ENCODE measurements at regions of chr9 and their contacts with region 1.

Region 1: GRCh38 chr9:15873569-15874177 is 320.8 kb downstream of the CCDC171 start:
- DNase-seq: peak in 3 of 4 experiments; percentile 4 to 30 (median 6)
- ATAC-seq: no peak
- H3K4me3 ChIP-seq: no peak overlapping the region
- H3K27ac ChIP-seq: no peak overlapping the region
- H3K4me1 ChIP-seq: no peaks in the 10 kb centered on the region
- H3K27me3 ChIP-seq: no peaks in the 10 kb centered on the region
- CTCF ChIP-seq: peak in 1 of 3 experiments; percentile 53; a peak in 3 of 6 replicates
- EP300 ChIP-seq: no peak
- POLR2A ChIP-seq: no peak
- RAD21 ChIP-seq: peak; percentile 40 to 50

Region 2: GRCh38 chr9:15531380-15531779 is 342.3 kb before region 1 on chr9:
- CTCF ChIA-PET with region 1: no interaction called
- POLR2A ChIA-PET with region 1: no interaction called
- in situ Hi-C with region 1: no loop called
- intact Hi-C with region 1: no loop called
- DNase-seq: no peak
- ATAC-seq: no peak
- H3K4me3 ChIP-seq: no peak overlapping the region
- H3K27ac ChIP-seq: no peak overlapping the region
- H3K4me1 ChIP-seq: peaks cover 0 to 3% of the 10 kb centered on the region in 2 experiments; a peak in 1 of 5 replicates
- H3K27me3 ChIP-seq: no peaks in the 10 kb centered on the region
- CTCF ChIP-seq: no peak
- EP300 ChIP-seq: no peak
- POLR2A ChIP-seq: no peak
- RAD21 ChIP-seq: no peak

Region 3: GRCh38 chr9:16133556-16134227 is 260.0 kb after region 1 on chr9:
- CTCF ChIA-PET with region 1: no interaction called
- POLR2A ChIA-PET with region 1: no interaction called
- in situ Hi-C with region 1: no loop called
- intact Hi-C with region 1: loop called (anchors 10 kb)
- DNase-seq: peak; percentile 28 to 52 (median 46)
- ATAC-seq: peak; percentile 74
- H3K4me3 ChIP-seq: no peak overlapping the region
- H3K27ac ChIP-seq: no peak overlapping the region
- H3K4me1 ChIP-seq: no peaks in the 10 kb centered on the region
- H3K27me3 ChIP-seq: no peaks in the 10 kb centered on the region
- CTCF ChIP-seq: peak; percentile 11 to 57 (median 38); a peak in 3 of 6 replicates
- EP300 ChIP-seq: no peak
- POLR2A ChIP-seq: no peak
- RAD21 ChIP-seq: no peak

Region 4: DNA sequence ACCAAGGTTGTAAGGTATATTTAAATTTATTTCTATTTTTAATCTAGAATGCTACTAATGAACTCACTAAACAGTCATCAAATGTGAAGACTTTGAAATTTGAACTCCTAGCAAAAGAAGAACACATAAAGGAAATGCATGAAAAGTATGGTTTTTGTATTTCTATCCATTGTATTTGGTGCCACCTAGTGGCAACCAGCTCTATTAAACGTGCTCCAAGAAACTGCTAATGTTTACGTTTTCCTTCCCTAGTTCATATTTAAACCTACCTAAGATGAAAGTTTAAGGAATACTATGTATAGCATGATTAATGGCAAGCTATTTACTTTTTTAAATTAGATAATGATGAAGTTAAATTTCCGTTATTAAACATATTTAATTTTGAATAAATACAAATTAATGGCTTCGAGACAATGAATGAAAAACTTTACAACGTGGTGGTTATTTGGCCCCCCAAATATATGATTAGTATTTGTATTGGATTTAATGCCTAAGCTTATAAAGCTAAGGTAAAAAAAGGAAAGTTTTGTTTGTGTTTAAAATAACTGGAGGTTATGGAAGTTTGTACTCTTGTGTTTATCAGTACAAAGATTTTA is 1589.3 kb after region 1 on chr9:
- CTCF ChIA-PET with region 1: interaction called, 3 read pairs
- POLR2A ChIA-PET with region 1: no interaction called
- in situ Hi-C with region 1: no loop called
- intact Hi-C with region 1: loop called (anchors 5 kb)
- DNase-seq: peak; percentile 5 to 48 (median 14)
- ATAC-seq: no peak
- H3K4me3 ChIP-seq: no peak overlapping the region
- H3K27ac ChIP-seq: no peak overlapping the region
- H3K4me1 ChIP-seq: no peaks in the 10 kb centered on the region
- H3K27me3 ChIP-seq: no peaks in the 10 kb centered on the region
- CTCF ChIP-seq: peak in 1 of 3 experiments; percentile 56; a peak in 2 of 6 replicates
- EP300 ChIP-seq: no peak
- POLR2A ChIP-seq: no peak
- RAD21 ChIP-seq: peak; percentile 56 to 73